ENCODE measurements at regions of chr5 and their contacts with region 1.

Region 1: DNA sequence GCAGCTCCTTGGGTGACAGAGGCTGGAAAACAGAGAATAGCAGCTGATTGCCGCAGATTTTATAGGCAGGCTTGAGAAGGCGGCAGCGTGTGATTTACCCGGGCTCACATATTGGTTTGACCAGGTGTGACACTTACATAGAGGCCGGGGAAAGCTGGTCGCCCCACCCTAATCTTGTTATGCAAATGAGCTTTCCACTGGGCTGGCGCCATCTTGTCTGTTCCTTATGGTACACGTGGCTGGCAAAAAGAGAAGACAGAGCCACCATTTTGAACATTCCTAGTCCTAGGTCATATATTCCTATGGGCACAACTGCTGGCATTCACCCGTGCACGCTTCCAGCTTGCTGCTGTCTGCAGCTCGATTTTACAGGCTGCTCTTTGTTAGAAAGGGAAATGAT is 11.3 kb upstream of the SPZ1 start:
- DNase-seq: no peak
- ATAC-seq: no peak
- H3K4me3 ChIP-seq: no peak overlapping the region
- H3K4me3 Mint-ChIP-seq: no peak overlapping the region
- H3K27ac ChIP-seq: no peak overlapping the region
- H3K27ac Mint-ChIP-seq: no peak overlapping the region
- H3K4me1 ChIP-seq: no peaks in the 10 kb centered on the region
- H3K4me1 Mint-ChIP-seq: no peaks in the 10 kb centered on the region
- H3K27me3 ChIP-seq: no peaks in the 10 kb centered on the region
- H3K27me3 Mint-ChIP-seq: no peaks in the 10 kb centered on the region
- CTCF ChIP-seq: no peak

Region 2: DNA sequence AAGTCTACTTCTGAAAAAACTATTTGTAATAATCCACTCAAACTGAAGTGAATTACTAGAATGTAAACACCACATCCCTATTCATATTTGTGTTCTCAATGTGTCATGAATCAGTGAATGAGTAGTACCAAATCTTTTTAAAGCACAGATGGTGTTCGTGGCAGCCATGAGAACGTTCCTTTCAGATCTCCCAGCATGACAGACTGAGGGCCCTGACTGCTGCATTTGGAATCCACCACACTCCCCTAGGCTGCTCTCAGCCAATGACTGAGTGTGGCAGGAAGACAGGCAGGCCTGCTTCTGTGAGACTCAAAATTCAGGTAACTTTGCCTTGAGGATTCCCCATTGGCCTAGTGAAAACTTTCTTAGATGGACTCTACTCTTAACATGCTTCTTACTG is 1083.5 kb before region 1 on chr5:
- intact Hi-C with region 1: no loop called
- DNase-seq: no peak
- ATAC-seq: no peak
- H3K4me3 ChIP-seq: no peak overlapping the region
- H3K4me3 Mint-ChIP-seq: no peak overlapping the region
- H3K27ac ChIP-seq: no peak overlapping the region
- H3K27ac Mint-ChIP-seq: no peak overlapping the region
- H3K4me1 ChIP-seq: no peaks in the 10 kb centered on the region
- H3K4me1 Mint-ChIP-seq: no peaks in the 10 kb centered on the region
- H3K27me3 ChIP-seq: no peaks in the 10 kb centered on the region
- H3K27me3 Mint-ChIP-seq: no peaks in the 10 kb centered on the region
- CTCF ChIP-seq: no peak

Region 3: DNA sequence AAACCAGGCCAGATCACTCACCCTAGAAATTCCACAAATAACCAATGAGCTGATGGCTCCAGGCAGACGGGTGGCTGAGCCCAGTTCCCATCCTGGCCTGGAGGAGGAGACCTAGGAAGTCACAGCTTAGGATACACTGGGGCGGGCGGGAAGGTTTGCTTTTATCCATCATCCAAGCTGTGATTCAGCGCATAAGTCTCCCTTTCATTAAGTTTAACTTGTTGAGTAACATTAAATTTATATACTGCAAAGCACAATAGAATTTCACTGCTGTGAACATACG is 217.7 kb before region 1 on chr5:
- intact Hi-C with region 1: loop called (anchors 1 kb)
- DNase-seq: no peak
- ATAC-seq: no peak
- H3K4me3 ChIP-seq: no peak overlapping the region
- H3K4me3 Mint-ChIP-seq: no peak overlapping the region
- H3K27ac ChIP-seq: no peak overlapping the region
- H3K27ac Mint-ChIP-seq: no peak overlapping the region
- H3K4me1 ChIP-seq: no peaks in the 10 kb centered on the region
- H3K4me1 Mint-ChIP-seq: no peaks in the 10 kb centered on the region
- H3K27me3 ChIP-seq: no peaks in the 10 kb centered on the region
- H3K27me3 Mint-ChIP-seq: peaks cover 0 to under 1% of the 10 kb centered on the region in 2 donors
- CTCF ChIP-seq: no peak

Region 4: GRCh38 chr5:80554646-80555045 is 246.1 kb after region 1 on chr5:
- intact Hi-C with region 1: no loop called
- DNase-seq: no peak
- ATAC-seq: no peak
- H3K4me3 ChIP-seq: no peak overlapping the region
- H3K4me3 Mint-ChIP-seq: no peak overlapping the region
- H3K27ac ChIP-seq: no peak overlapping the region
- H3K27ac Mint-ChIP-seq: no peak overlapping the region
- H3K4me1 ChIP-seq: no peaks in the 10 kb centered on the region
- H3K4me1 Mint-ChIP-seq: no peaks in the 10 kb centered on the region
- H3K27me3 ChIP-seq: peaks cover 7% of the 10 kb centered on the region
- H3K27me3 Mint-ChIP-seq: peaks cover 12 to 24% of the 10 kb centered on the region in 2 donors
- CTCF ChIP-seq: no peak

Measured in natural killer cell (primary cell).